ENCODE measurements at regions of chr1 and their contacts with region 1.

Region 1: GRCh38 chr1:11979851-11980675 is at the start of gene MFN2:
- DNase-seq: peak; percentile 87 to 97
- H3K4me3 ChIP-seq: peak within 1 kb of the TSS; percentile 91 to 92
- H3K27ac ChIP-seq: peak within 1 kb of the TSS; percentile 89 to 95
- H3K4me1 ChIP-seq: peaks cover 0 to 11% of the 10 kb centered on the region in 2 donors
- H3K27me3 ChIP-seq: no peaks in the 10 kb centered on the region
- CTCF ChIP-seq: no peak
- total RNA-seq, gene MFN2: 85.6 TPM

Region 2: GRCh38 chr1:11934302-11935056 is 45.6 kb before region 1 on chr1 and contains the start of gene PLOD1:
- intact Hi-C with region 1: loop called (anchors 1 kb)
- DNase-seq: peak; percentile 70 to 96
- H3K4me3 ChIP-seq: peak within 1 kb of the TSS; percentile 68 to 78
- H3K27ac ChIP-seq: peak within 1 kb of the TSS; percentile 84 to 89
- H3K4me1 ChIP-seq: peaks cover 0 to 22% of the 10 kb centered on the region in 2 donors
- H3K27me3 ChIP-seq: no peaks in the 10 kb centered on the region
- CTCF ChIP-seq: no peak
- total RNA-seq, gene PLOD1: 79.9 TPM

Region 3: GRCh38 chr1:12244078-12244477 is 264.0 kb after region 1 on chr1:
- intact Hi-C with region 1: no loop called
- DNase-seq: no peak
- H3K4me3 ChIP-seq: no peak overlapping the region
- H3K27ac ChIP-seq: no peak overlapping the region
- H3K4me1 ChIP-seq: no peaks in the 10 kb centered on the region
- H3K27me3 ChIP-seq: no peaks in the 10 kb centered on the region
- CTCF ChIP-seq: peak in 1 of 3 experiments; percentile 6